Heart left ventricle (tissue), 16 donors: ENCODE measurements at regions of chr9 and their contacts with region 1.

Region 1: GRCh38 chr9:116020801-116021200 is 132.8 kb upstream of the PAPPA start:
- DNase-seq: no peak
- ATAC-seq: no peak
- H3K4me3 ChIP-seq: no peak overlapping the region
- H3K27ac ChIP-seq: no peak overlapping the region
- H3K4me1 ChIP-seq: no peaks in the 10 kb centered on the region
- H3K27me3 ChIP-seq: no peaks in the 10 kb centered on the region
- CTCF ChIP-seq: no peak
- POLR2A ChIP-seq: no peak

Region 2: GRCh38 chr9:116000748-116001329 is 20.0 kb before region 1 on chr9:
- intact Hi-C with region 1: loop called in 1 of 10 experiments (anchors 2 kb)
- DNase-seq: peak in 1 of 5 donors; percentile 30
- ATAC-seq: peak in 2 of 4 donors; percentile 42 to 59
- H3K4me3 ChIP-seq: no peak overlapping the region
- H3K27ac ChIP-seq: no peak overlapping the region
- H3K4me1 ChIP-seq: no peaks in the 10 kb centered on the region
- H3K27me3 ChIP-seq: no peaks in the 10 kb centered on the region
- CTCF ChIP-seq: peak; percentile 26 to 57 (median 38)
- POLR2A ChIP-seq: no peak